ENCODE measurements at regions of chr19 and their contacts with region 1.

Region 1: DNA sequence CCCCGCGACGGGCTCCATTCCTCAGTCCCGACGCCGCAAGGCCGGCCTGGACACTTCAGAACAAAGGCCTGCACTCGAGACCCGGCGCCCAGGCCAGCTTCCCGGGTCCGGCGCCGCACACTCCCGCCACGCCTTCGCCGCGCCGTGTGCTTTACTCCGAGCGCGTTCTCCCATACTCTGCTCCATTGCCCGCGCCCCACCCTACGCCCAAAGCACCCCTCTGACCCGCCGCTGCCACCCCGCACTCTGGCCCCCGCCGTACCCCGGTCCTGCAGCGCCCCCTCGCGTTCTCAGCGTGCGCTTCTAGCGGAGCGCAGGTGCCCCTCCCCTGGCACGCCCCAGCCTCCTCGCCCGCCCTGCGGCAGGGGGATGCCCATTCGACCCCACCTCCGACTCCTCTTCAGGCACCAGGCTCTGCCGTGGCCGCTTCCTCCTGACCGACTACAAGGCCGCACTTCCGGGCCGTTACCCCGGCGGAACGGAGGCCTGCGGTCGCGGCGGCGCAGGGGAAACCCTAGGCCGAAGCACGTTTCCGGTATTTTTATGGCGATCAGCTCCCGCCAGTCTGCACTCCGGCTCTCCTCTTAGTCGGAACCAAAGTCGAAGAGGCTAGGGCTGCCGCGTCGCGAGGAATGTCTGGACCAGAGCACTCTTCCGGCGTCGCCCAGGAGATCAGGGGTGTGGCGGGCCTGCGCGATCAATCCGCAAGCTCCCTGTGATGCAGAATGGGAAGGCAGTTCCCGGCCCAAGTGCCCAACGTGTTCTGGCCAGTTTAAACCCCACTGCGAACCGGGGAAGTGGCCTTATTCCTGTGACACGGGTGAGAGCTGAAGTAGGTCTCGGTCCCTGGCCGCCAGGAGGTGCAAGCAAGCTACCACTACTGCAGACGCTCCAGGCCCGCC is at the start of gene ZBTB45:
- DNase-seq: peak; percentile 93
- H3K4me3 ChIP-seq: peak within 1 kb of the TSS; percentile 75 to 83
- H3K27ac ChIP-seq: peak within 1 kb of the TSS; percentile 92 to 97
- H3K4me1 ChIP-seq: peaks cover 0 to 29% of the 10 kb centered on the region in 2 experiments; a peak in 1 of 4 replicates
- H3K27me3 ChIP-seq: no peaks in the 10 kb centered on the region
- CTCF ChIP-seq: peak; percentile 74
- EP300 ChIP-seq: peak; percentile 14 to 56; a peak in 2 of 4 replicates
- RAD21 ChIP-seq: peak; percentile 67
- polyA plus RNA-seq, gene ZBTB45: 7.9 and 11.3 TPM in 2 replicates

Region 2: DNA sequence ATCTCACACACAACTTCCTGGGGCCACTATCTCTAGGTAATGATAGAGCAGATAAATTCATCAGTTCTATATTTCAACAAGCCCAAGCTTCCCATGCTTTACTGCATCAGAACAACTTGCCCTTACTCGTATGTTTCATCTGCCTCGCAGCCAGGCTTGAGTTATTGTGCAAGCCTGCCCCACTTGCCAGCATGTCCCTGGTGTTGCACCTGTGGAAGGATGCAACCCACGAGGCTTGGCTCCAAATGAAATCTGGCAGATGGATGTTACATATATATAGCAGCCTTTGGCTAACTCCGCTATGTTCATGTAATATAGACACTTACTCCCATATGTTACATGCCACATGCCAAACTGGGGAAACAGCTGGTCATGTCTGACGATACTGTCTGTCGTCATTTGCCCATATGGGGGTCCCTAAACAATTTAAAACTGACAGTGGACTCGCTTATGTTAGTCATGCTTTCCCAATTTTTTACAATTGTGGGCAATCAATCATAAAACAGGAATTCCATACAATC is 208.2 kb before region 1 on chr19:
- CTCF ChIA-PET with region 1: no interaction called
- POLR2A ChIA-PET with region 1: no interaction called
- DNase-seq: no peak
- H3K4me3 ChIP-seq: no peak overlapping the region
- H3K27ac ChIP-seq: no peak overlapping the region
- H3K4me1 ChIP-seq: peaks cover 0 to 9% of the 10 kb centered on the region in 2 experiments; a peak in 2 of 4 replicates
- H3K27me3 ChIP-seq: no peaks in the 10 kb centered on the region
- CTCF ChIP-seq: no peak
- EP300 ChIP-seq: no peak
- RAD21 ChIP-seq: no peak

Region 3: DNA sequence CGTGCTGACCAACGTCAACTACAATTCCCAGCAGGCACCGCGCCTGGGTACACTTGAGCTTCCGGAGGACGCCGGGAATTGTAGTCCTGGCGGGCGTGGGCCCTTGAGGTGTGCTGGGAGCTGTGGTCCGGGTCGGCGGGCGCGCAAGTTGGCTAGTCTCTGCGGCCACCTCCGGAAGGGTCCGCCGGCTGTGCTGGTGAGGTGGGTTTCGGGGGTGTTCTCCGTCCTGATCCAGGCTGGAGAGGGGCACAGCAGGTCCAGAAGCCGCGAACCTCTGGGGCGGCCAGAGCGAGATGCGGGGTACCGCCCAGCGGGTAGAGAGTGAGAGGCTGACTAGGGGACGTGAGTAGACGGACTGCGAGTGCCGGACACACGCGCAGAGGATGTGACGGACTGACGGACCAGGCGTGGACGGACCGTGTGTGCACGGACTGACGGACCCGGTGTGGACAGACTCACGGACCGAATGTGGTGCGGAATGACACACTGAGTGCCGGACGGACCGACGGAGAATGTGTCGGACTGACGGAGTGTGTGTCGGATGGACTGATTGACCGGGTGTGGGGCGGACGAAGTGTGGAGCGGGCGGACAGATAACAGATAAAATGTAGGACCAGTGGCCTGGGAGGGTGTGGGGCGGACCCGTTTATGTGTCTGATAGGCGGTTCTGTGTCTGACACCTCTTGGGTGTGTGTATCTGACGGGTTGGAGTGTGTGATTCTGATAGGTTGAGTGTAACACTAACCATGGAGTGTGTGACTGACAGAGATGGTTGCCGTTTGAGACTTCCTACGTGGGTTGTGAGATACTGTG is 192.5 kb before region 1 on chr19 and contains the start of gene ZSCAN22:
- CTCF ChIA-PET with region 1: interaction called, 17 read pairs
- POLR2A ChIA-PET with region 1: interaction called, 5 read pairs
- DNase-seq: peak; percentile 94
- H3K4me3 ChIP-seq: peak within 1 kb of the TSS; percentile 70 to 89
- H3K27ac ChIP-seq: peak within 1 kb of the TSS; percentile 83 to 90
- H3K4me1 ChIP-seq: peaks cover 0 to 19% of the 10 kb centered on the region in 2 experiments; a peak in 1 of 4 replicates
- H3K27me3 ChIP-seq: no peaks in the 10 kb centered on the region
- CTCF ChIP-seq: no peak
- EP300 ChIP-seq: no peak; a peak in 1 of 4 replicates
- RAD21 ChIP-seq: no peak
- polyA plus RNA-seq, gene ZSCAN22: 2.3 and 2.9 TPM in 2 replicates

Region 4: DNA sequence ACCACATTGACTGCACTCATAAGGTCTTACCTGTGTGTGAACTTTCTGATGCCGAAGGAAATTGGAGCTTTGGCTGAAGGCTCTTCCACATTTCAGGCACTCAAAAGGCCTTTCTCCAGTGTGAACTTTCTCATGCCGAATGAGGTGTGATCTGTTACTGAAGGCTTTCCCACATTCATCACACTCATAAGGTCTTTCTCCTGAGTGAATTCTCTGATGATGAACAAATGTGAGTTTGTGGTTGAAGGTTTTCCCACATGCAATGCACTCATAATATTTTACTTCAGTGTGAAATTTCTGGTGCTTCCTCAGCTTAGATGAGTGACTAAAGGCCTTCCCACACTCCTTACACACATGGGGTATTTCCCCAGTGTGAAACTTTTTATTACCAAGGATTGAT is 85.4 kb before region 1 on chr19:
- CTCF ChIA-PET with region 1: no interaction called
- POLR2A ChIA-PET with region 1: no interaction called
- DNase-seq: no peak
- H3K4me3 ChIP-seq: peak overlapping the region in 1 of 2 experiments; percentile 19; a peak in 1 of 4 replicates
- H3K27ac ChIP-seq: no peak overlapping the region
- H3K4me1 ChIP-seq: peaks cover 0 to 3% of the 10 kb centered on the region in 2 experiments; a peak in 1 of 4 replicates
- H3K27me3 ChIP-seq: no peaks in the 10 kb centered on the region
- CTCF ChIP-seq: no peak
- EP300 ChIP-seq: no peak
- RAD21 ChIP-seq: no peak

Region 5: GRCh38 chr19:58499021-58499927 is 20.3 kb before region 1 on chr19:
- CTCF ChIA-PET with region 1: interaction called, 27 read pairs
- POLR2A ChIA-PET with region 1: interaction called, 3 read pairs
- DNase-seq: peak; percentile 99
- H3K4me3 ChIP-seq: peak overlapping the region; percentile 58 to 77
- H3K27ac ChIP-seq: peak overlapping the region; percentile 70 to 74
- H3K4me1 ChIP-seq: peaks cover 0 to 24% of the 10 kb centered on the region in 2 experiments; a peak in 1 of 4 replicates
- H3K27me3 ChIP-seq: no peaks in the 10 kb centered on the region
- CTCF ChIP-seq: peak; percentile 57
- EP300 ChIP-seq: no peak
- RAD21 ChIP-seq: no peak

Region 6: DNA sequence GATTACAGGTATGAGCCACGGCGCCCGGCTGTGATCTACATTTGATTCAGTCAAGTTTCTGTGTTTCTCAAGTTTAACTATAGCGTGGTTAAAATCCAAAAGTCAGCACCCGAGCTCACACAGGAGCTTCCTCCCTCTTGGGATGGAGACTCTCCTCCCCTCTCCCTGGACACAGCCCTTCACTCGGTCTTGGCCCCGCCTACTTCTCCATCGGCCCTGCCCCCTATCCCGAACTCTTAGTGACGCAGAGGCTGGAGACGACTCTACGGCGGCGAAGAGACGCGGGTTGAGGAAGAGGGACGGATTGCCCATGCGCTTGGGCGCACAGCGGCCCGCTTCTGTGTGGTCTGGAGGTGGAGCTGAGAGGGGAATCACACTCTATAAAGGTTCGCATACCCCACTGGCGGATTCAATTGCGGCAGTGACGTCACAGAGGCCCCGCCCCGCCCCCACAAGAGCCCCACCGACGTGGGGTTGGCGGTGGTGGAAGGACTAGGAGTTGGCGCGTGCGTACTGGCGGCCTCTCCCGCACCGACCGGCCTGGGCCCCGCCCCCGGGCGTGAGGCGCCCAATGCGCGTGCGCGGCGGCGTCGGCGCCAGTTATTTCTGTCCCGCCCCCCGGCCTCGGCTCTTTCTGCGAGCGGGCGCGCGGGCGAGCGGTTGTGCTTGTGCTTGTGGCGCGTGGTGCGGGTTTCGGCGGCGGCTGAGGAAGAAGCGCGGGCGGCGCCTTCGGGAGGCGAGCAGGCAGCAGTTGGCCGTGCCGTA is 24.4 kb after region 1 on chr19 and contains the start of gene TRIM28:
- CTCF ChIA-PET with region 1: interaction called, 81 read pairs
- POLR2A ChIA-PET with region 1: interaction called, 45 read pairs
- DNase-seq: peak; percentile 100
- H3K4me3 ChIP-seq: peak within 1 kb of the TSS; percentile 94 to 97
- H3K27ac ChIP-seq: peak within 1 kb of the TSS; percentile 91 to 97
- H3K4me1 ChIP-seq: peaks cover 11 to 20% of the 10 kb centered on the region in 2 experiments; a peak in 3 of 4 replicates
- H3K27me3 ChIP-seq: no peaks in the 10 kb centered on the region; the same call in 1 of the 2 replicates
- CTCF ChIP-seq: no peak
- EP300 ChIP-seq: no peak
- RAD21 ChIP-seq: 0 out of 2 replicates have a peak, but pooled peaks have one; percentile 6
- polyA plus RNA-seq, gene TRIM28: 321 and 594 TPM in 2 replicates

Region 7: DNA sequence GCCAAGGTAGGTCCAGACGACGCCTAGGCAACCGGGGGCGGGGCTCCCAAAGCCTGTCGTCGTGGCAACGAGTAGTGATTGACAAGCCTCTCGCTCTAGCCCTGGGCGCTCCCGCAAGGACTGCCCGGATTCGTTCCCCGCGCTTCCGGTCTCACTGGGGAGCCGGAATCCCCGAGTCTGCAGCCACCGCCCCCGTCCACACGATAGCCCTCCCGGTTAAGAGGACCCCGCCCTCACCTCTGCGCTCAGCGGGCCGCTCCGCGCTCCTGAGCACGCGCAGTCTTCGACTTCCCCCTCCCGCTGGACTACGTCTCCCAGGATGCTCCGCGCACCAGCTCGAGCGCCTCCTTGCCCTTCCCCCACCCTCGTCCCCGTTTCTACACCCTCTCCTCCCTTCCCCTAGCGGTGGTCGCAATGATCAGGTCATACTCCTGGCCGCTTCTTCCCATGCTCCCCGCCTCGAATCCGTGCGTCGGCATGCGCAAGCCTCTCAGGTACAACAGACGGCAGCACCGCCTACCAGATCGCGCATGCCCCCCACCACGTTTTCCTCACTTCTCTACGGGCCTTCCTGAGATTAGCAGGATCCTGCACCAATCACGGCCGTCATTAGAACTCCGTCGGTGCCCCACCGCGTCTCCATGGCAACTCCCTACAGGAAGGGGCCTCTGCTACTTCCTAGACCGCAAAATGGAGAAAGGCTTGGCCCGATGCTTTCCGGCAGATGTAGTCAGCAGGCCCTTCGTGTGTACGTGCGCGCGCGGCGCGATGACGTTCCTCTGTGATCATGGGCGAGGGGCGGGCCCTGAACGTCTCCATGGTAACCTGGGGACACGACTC is 53.4 kb after region 1 on chr19 and contains the start of gene MZF1:
- CTCF ChIA-PET with region 1: interaction called, 9 read pairs
- POLR2A ChIA-PET with region 1: interaction called, 13 read pairs
- DNase-seq: peak; percentile 94
- H3K4me3 ChIP-seq: peak within 1 kb of the TSS; percentile 64 to 79
- H3K27ac ChIP-seq: peak within 1 kb of the TSS; percentile 97
- H3K4me1 ChIP-seq: peaks cover 4 to 22% of the 10 kb centered on the region in 2 experiments; a peak in 2 of 4 replicates
- H3K27me3 ChIP-seq: no peaks in the 10 kb centered on the region
- CTCF ChIP-seq: no peak; the same call in 1 of the 2 replicates
- EP300 ChIP-seq: no peak
- RAD21 ChIP-seq: no peak
- polyA plus RNA-seq, gene MZF1: 31.8 and 38.4 TPM in 2 replicates

Measured in SK-N-SH (cell line).